ENCODE measurements at regions of chr12 and their contacts with region 1.

Region 1: DNA sequence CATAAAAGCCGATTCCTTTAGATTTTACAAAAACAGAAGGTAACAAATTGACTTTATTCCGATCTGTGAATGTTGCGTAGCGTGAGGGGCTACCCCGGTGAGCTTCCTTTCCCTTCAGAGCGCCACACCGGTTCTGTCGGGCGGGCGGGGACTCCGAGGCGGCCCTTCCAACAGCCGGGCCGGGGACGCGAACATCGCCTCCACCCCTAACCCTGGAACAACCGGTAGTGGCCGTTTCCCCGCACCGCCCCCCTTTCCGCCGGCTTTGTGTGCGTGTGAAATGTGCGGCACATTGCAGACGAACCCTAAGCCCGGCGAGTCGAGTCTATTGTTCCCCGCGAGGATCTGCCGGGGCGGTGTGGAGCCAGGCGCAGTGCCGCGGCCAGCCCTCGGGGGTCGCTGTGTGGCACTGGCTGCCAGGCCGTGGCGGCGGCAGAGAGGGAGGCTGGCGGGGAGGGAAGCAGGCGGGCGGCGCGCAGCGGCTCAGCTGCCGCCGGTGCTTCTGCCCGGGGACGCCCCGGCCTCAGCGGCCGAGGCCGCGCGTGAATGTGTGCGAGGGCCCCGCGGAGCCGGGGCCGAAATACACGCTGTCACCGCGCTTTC is 775 bp upstream of the ARID2 start:
- DNase-seq: peak; percentile 98
- ATAC-seq: peak; percentile 68
- H3K4me3 ChIP-seq: peak overlapping the region; percentile 87 to 98 (median 95)
- H3K4me3 Mint-ChIP-seq: peak overlapping the region; percentile 100
- H3K27ac ChIP-seq: peak overlapping the region; percentile 98 to 99
- H3K27ac Mint-ChIP-seq: peak overlapping the region; percentile 99
- H3K4me1 ChIP-seq: peaks cover 16 to 38% of the 10 kb centered on the region in 2 donors
- H3K4me1 Mint-ChIP-seq: peaks cover 36% of the 10 kb centered on the region
- H3K27me3 ChIP-seq: no peaks in the 10 kb centered on the region
- H3K27me3 Mint-ChIP-seq: no peaks in the 10 kb centered on the region
- CTCF ChIP-seq: peak; percentile 93

Region 2: DNA sequence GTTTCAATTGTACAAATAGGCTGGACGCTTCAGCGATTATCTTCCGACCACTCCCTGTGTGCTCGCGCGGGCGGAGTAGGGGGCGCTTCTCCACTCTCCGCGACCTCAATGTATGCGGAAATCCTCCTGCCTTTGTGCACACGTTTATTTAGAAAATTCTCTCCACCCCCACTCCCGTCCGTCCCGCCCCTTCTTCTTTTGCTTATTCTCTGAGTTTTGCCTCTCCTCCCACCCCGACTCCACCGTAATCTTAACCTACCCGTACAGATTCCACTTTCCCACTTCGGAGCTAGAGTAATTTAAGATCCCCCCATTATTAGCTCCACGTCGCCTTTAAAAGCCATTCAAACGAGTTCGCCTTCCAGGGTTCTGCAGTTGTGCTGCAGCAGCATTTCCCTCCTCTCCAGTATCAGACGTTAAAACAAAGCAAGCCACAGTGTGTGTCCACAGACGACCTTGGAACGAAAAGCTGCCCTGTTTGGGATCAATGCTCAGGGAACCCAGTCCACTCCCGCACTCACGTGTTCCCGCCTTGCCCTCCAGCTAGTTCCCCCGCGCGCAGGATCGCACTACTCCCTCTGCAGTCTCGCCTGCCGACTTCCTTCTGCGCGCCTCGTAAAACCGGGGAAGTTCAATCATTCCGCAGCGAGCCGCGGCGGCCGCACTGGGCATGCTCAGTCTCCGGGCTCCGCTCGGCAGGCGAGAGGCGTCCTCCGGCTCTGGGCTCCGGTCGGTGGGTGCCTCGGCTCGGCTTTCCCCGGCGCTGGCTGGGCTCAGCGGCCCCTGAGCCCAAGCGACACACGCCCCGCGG is 513.1 kb before region 1 on chr12 and contains the start of gene ANO6:
- CTCF ChIA-PET with region 1: no interaction called
- POLR2A ChIA-PET with region 1: interaction called, 3 read pairs
- intact Hi-C with region 1: loop called (anchors 1 kb)
- DNase-seq: peak; percentile 85
- ATAC-seq: peak; percentile 73
- H3K4me3 ChIP-seq: peak within 1 kb of the TSS; percentile 65 to 96 (median 91)
- H3K4me3 Mint-ChIP-seq: peak within 1 kb of the TSS; percentile 96
- H3K27ac ChIP-seq: peak within 1 kb of the TSS; percentile 37 to 68
- H3K27ac Mint-ChIP-seq: peak within 1 kb of the TSS; percentile 89
- H3K4me1 ChIP-seq: peaks cover 14% of the 10 kb centered on the region in 2 donors
- H3K4me1 Mint-ChIP-seq: peaks cover 51% of the 10 kb centered on the region
- H3K27me3 ChIP-seq: no peaks in the 10 kb centered on the region
- H3K27me3 Mint-ChIP-seq: no peaks in the 10 kb centered on the region
- CTCF ChIP-seq: no peak
- total RNA-seq, gene ANO6: 18.7 and 19.5 TPM in 2 replicates

Region 3: DNA sequence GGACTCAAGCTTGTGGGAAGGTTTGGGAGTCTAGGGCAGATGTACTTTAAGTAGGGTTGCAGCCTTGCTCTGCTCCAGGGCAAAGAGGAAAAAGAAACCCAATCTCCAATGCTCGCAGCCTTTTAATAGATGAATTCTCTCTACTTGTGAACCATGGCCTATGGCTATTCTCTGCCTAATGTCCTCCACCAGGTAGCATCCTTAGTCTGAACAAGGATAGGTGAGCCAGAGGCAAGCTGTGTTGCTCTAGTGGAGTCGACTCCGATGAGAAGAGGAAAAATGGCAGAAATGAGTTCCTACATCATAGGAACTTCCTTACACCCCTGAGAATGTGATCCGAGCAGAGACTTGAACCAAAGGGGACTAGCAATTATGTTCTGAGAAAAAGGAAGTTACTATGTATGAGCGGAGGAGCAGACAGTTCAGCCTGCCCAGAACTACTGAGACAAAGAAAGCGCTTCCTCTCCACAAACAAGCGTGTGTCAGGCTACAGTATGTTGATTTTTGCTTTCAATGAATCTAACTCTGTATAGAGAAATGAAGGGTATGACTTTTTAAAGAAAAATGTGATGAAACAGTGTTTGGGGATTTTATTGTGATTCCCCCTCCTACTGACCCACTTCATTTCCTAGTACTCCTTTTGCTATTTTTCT is 152.8 kb before region 1 on chr12:
- CTCF ChIA-PET with region 1: interaction called, 5 read pairs
- POLR2A ChIA-PET with region 1: interaction called, 5 read pairs
- intact Hi-C with region 1: loop called (anchors 2 kb)
- DNase-seq: peak; percentile 77
- ATAC-seq: peak; percentile 71
- H3K4me3 ChIP-seq: peak overlapping the region in 1 of 5 experiments; percentile 10
- H3K4me3 Mint-ChIP-seq: peak overlapping the region; percentile 44
- H3K27ac ChIP-seq: peak overlapping the region; percentile 5 to 63
- H3K27ac Mint-ChIP-seq: peak overlapping the region; percentile 85
- H3K4me1 ChIP-seq: peaks cover 32 to 33% of the 10 kb centered on the region in 2 donors
- H3K4me1 Mint-ChIP-seq: peaks cover 39% of the 10 kb centered on the region
- H3K27me3 ChIP-seq: no peaks in the 10 kb centered on the region
- H3K27me3 Mint-ChIP-seq: peaks cover 4% of the 10 kb centered on the region
- CTCF ChIP-seq: no peak

Region 4: DNA sequence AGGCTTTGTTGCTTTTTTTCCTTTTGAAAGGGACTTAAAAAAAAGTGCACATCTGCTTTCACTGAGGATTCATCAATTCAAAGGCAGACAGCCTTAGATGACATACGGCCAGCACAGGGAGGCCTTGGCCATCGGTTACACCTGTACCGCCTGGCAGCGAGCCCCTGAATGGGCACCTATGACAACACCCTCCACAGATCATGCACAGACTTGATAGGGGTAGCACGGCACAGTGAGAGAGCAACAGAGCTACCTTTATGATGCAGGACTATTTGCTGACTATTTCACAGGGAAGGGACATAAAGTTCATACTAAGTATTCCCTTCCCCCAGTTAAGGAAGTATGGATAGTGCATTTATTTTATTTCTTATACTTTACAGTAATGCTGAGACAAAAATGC is 137.1 kb before region 1 on chr12:
- CTCF ChIA-PET with region 1: no interaction called
- POLR2A ChIA-PET with region 1: no interaction called
- intact Hi-C with region 1: no loop called
- DNase-seq: no peak
- ATAC-seq: no peak
- H3K4me3 ChIP-seq: no peak overlapping the region
- H3K4me3 Mint-ChIP-seq: no peak overlapping the region
- H3K27ac ChIP-seq: no peak overlapping the region
- H3K27ac Mint-ChIP-seq: no peak overlapping the region
- H3K4me1 ChIP-seq: no peaks in the 10 kb centered on the region
- H3K4me1 Mint-ChIP-seq: no peaks in the 10 kb centered on the region
- H3K27me3 ChIP-seq: peaks cover 0 to 4% (median 1%) of the 10 kb centered on the region in 4 experiments
- H3K27me3 Mint-ChIP-seq: peaks cover 13% of the 10 kb centered on the region
- CTCF ChIP-seq: no peak

Region 5: DNA sequence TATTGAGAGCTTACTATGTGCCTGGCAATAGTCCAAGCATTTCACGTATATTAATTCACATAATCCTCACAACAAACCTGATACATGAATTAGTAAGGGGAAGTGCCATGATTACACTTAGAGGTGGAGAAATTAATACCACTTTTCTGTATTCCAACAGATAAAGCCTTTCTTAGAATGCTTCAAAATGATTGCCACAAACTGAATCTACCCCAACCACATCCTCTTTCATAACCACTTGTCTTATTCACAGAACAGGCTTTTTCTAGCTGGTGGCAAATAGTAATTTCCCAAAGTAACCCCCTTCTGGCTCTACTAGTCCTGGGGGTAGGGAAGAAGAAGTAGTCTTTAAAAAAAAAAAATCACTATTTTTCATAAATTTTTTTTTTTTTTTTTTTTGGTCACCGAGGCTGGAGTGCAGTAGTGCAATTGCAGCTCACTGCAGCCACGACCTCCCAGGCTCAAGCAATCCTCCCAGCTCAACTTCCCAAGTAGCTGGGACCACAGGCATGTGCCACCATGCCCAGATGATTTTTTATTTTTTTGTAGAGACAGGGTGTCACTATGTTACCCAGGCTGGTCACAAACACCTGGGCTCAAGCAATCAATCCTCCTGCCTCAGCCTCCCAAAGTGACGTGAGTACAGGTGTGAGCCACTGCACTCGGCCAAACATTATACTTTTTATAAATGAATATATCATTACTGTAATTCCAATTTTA is 58.2 kb before region 1 on chr12:
- CTCF ChIA-PET with region 1: interaction called, 13 read pairs
- POLR2A ChIA-PET with region 1: interaction called, 3 read pairs
- intact Hi-C with region 1: loop called (anchors 2 kb)
- DNase-seq: peak; percentile 55
- ATAC-seq: peak; percentile 55
- H3K4me3 ChIP-seq: no peak overlapping the region
- H3K4me3 Mint-ChIP-seq: peak overlapping the region; percentile 2
- H3K27ac ChIP-seq: no peak overlapping the region
- H3K27ac Mint-ChIP-seq: no peak overlapping the region
- H3K4me1 ChIP-seq: peaks cover 27 to 28% of the 10 kb centered on the region in 2 donors
- H3K4me1 Mint-ChIP-seq: peaks cover 23% of the 10 kb centered on the region
- H3K27me3 ChIP-seq: no peaks in the 10 kb centered on the region
- H3K27me3 Mint-ChIP-seq: no peaks in the 10 kb centered on the region
- CTCF ChIP-seq: no peak

Region 6: GRCh38 chr12:45745861-45746277 is 17.1 kb after region 1 on chr12:
- CTCF ChIA-PET with region 1: interaction called, 14 read pairs
- POLR2A ChIA-PET with region 1: interaction called, 9 read pairs
- intact Hi-C with region 1: loop called (anchors 2 kb)
- DNase-seq: peak; percentile 38
- ATAC-seq: peak; percentile 49
- H3K4me3 ChIP-seq: no peak overlapping the region
- H3K4me3 Mint-ChIP-seq: no peak overlapping the region
- H3K27ac ChIP-seq: no peak overlapping the region
- H3K27ac Mint-ChIP-seq: no peak overlapping the region
- H3K4me1 ChIP-seq: peaks cover 0 to 4% of the 10 kb centered on the region in 2 donors
- H3K4me1 Mint-ChIP-seq: peaks cover 11% of the 10 kb centered on the region
- H3K27me3 ChIP-seq: no peaks in the 10 kb centered on the region
- H3K27me3 Mint-ChIP-seq: no peaks in the 10 kb centered on the region
- CTCF ChIP-seq: peak; percentile 66

Region 7: DNA sequence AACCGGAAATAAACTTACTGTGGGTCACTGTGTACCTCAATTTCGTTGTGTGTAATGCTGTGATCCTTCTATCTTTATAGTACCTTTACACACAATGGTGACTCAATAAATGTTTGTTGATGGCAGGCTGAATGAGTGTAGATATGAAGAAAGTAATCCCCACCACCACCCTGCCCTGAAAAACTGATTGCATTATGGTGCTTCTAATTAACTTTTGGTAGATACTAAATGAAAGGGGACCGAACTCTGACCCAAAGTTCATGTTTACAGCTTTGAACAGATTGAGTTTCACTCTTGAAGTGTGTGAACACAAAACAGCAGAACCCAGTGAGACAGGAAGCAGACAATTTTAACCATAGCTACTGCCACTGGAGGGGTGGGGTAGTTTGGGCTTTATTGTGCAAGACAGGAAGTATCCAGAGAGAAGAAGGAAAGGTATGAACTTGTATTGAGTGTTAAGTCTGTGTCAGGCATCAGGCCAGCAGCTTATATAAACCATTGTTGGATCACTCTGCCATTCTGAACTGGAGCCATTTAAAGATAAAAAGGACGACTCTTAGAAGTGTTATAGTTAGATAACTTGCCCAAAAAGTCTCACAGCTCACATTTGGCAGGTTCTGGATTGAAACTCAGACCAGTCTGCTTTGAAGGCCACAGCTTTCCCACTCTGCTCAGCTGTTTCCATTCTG is 1548.0 kb after region 1 on chr12:
- CTCF ChIA-PET with region 1: no interaction called
- POLR2A ChIA-PET with region 1: interaction called, 16 read pairs
- intact Hi-C with region 1: no loop called
- DNase-seq: peak; percentile 64
- ATAC-seq: peak; percentile 90
- H3K4me3 ChIP-seq: peak overlapping the region in 2 of 5 experiments; percentile 20 to 31
- H3K4me3 Mint-ChIP-seq: peak overlapping the region; percentile 72
- H3K27ac ChIP-seq: peak overlapping the region; percentile 70 to 88
- H3K27ac Mint-ChIP-seq: peak overlapping the region; percentile 94
- H3K4me1 ChIP-seq: peaks cover 49 to 51% of the 10 kb centered on the region in 2 donors
- H3K4me1 Mint-ChIP-seq: peaks cover 65% of the 10 kb centered on the region
- H3K27me3 ChIP-seq: no peaks in the 10 kb centered on the region
- H3K27me3 Mint-ChIP-seq: no peaks in the 10 kb centered on the region
- CTCF ChIP-seq: no peak